A549 (cell line): ENCODE measurements at regions of chr5 and their contacts with region 1.

Region 1: GRCh38 chr5:173573126-173573960 is 43.1 kb downstream of the BOD1 start:
- DNase-seq: peak; percentile 55 to 66
- ATAC-seq: peak; percentile 95 to 99
- H3K4me3 ChIP-seq: no peak overlapping the region
- H3K27ac ChIP-seq: peak overlapping the region; percentile 62 to 63; a peak in 5 of 6 replicates
- H3K4me1 ChIP-seq: peaks cover 5% of the 10 kb centered on the region; the same call in 2 of the 3 replicates
- CTCF ChIP-seq: peak; percentile 92
- EP300 ChIP-seq: no peak
- POLR2A ChIP-seq: no peak
- RAD21 ChIP-seq: peak; percentile 85 to 94

Region 2: GRCh38 chr5:173315495-173316350 is 257.6 kb before region 1 on chr5:
- CTCF ChIA-PET with region 1: interaction called, 15 read pairs
- POLR2A ChIA-PET with region 1: no interaction called
- DNase-seq: no peak
- ATAC-seq: no peak
- H3K4me3 ChIP-seq: no peak overlapping the region
- H3K27ac ChIP-seq: no peak overlapping the region
- H3K4me1 ChIP-seq: no peaks in the 10 kb centered on the region
- CTCF ChIP-seq: no peak
- EP300 ChIP-seq: no peak
- POLR2A ChIP-seq: no peak
- RAD21 ChIP-seq: no peak

Region 3: DNA sequence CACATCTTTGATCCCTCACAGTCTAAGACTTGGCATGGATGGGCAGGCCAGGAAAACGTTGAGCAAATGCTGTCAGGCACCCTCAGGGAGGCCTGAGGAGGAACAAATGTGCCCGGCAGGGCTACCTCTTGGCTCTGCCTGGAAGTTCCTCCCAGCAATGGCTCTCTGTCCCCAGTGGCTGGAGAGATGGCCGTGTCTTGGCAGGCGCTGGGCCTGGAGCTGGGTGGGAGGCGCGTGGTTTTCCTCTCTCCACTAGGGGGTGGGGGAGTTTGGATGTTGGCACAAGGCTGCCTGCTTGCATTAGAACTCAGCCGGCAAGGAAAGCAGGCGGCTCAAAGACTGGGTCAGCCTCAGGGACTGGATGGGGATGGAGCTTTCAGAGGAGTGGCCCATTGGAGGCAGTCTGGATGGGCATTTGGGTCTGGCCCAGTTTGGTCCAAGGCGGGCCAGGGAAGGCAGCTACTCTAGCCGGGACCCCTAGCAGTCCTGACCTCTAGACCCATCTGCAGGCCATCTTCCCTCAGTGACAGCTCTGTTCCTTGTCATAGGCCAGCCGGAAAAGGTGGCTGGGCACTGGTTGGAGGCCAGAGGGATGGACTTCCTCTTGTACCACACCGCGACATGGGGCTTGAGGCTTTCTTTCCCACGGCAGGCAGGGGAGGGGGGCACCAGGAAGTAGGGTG is 176.9 kb before region 1 on chr5:
- CTCF ChIA-PET with region 1: interaction called, 19 read pairs
- POLR2A ChIA-PET with region 1: no interaction called
- DNase-seq: peak; percentile 20 to 23
- ATAC-seq: peak; percentile 70 to 84; a peak in 5 of 6 replicates
- H3K4me3 ChIP-seq: no peak overlapping the region
- H3K27ac ChIP-seq: no peak overlapping the region
- H3K4me1 ChIP-seq: no peaks in the 10 kb centered on the region
- CTCF ChIP-seq: 0 out of 3 replicates have a peak, but pooled peaks have one; percentile 6
- EP300 ChIP-seq: no peak
- POLR2A ChIP-seq: no peak
- RAD21 ChIP-seq: no peak

Region 4: DNA sequence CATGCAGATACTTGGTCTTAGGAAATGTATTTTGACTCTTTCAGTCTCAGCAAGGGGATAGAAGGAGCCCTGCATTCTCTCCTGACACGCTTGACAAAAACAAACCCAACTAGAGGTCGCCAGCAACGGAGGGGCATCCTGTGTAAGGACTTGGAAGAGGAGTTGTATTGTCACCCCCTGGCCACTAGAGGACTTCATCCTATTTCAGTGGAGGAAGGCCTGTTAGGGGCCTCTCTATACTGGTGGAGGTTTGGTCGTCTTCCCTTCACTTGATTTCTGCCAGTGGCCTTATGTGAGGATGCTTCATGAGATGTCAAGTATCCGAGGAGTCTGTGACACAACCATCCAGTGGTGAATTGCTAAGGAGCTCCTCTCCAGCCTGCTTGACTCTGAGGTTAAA is 122.3 kb before region 1 on chr5:
- CTCF ChIA-PET with region 1: interaction called, 13 read pairs
- POLR2A ChIA-PET with region 1: interaction called, 3 read pairs
- DNase-seq: peak; percentile 33 to 62
- ATAC-seq: no peak
- H3K4me3 ChIP-seq: no peak overlapping the region
- H3K27ac ChIP-seq: peak overlapping the region; percentile 30 to 86; a peak in 4 of 6 replicates
- H3K4me1 ChIP-seq: peaks cover 45% of the 10 kb centered on the region
- CTCF ChIP-seq: no peak; the same call in 2 of the 3 replicates
- EP300 ChIP-seq: no peak
- POLR2A ChIP-seq: no peak
- RAD21 ChIP-seq: peak in 1 of 2 experiments; percentile 28; a peak in 2 of 5 replicates

Region 5: GRCh38 chr5:173554038-173554954 is 19.0 kb before region 1 on chr5:
- CTCF ChIA-PET with region 1: interaction called, 27 read pairs
- POLR2A ChIA-PET with region 1: no interaction called
- DNase-seq: no peak
- ATAC-seq: no peak
- H3K4me3 ChIP-seq: no peak overlapping the region
- H3K27ac ChIP-seq: no peak overlapping the region
- H3K4me1 ChIP-seq: no peaks in the 10 kb centered on the region
- CTCF ChIP-seq: no peak
- EP300 ChIP-seq: no peak
- POLR2A ChIP-seq: no peak
- RAD21 ChIP-seq: no peak

Region 6: GRCh38 chr5:173602423-173602822 is 29.1 kb after region 1 on chr5:
- CTCF ChIA-PET with region 1: interaction called, 14 read pairs
- POLR2A ChIA-PET with region 1: no interaction called
- DNase-seq: no peak
- ATAC-seq: no peak
- H3K4me3 ChIP-seq: no peak overlapping the region
- H3K27ac ChIP-seq: no peak overlapping the region
- H3K4me1 ChIP-seq: no peaks in the 10 kb centered on the region
- CTCF ChIP-seq: no peak
- EP300 ChIP-seq: no peak
- POLR2A ChIP-seq: no peak
- RAD21 ChIP-seq: no peak